ENCODE measurements at regions of chr10 and their contacts with region 1.

Region 1: GRCh38 chr10:52313933-52314816 is at the start of gene DKK1:
- DNase-seq: peak; percentile 69
- ATAC-seq: peak; percentile 78
- total RNA-seq, gene DKK1: not detected

Region 2: GRCh38 chr10:52420656-52421055 is 106.5 kb after region 1 on chr10:
- intact Hi-C with region 1: no loop called
- DNase-seq: no peak
- ATAC-seq: no peak

Region 3: GRCh38 chr10:52652431-52653262 is 338.5 kb after region 1 on chr10:
- intact Hi-C with region 1: loop called (anchors 5 kb)
- DNase-seq: no peak
- ATAC-seq: peak; percentile 54